ENCODE measurements at regions of chr2 and their contacts with region 1.

Region 1: DNA sequence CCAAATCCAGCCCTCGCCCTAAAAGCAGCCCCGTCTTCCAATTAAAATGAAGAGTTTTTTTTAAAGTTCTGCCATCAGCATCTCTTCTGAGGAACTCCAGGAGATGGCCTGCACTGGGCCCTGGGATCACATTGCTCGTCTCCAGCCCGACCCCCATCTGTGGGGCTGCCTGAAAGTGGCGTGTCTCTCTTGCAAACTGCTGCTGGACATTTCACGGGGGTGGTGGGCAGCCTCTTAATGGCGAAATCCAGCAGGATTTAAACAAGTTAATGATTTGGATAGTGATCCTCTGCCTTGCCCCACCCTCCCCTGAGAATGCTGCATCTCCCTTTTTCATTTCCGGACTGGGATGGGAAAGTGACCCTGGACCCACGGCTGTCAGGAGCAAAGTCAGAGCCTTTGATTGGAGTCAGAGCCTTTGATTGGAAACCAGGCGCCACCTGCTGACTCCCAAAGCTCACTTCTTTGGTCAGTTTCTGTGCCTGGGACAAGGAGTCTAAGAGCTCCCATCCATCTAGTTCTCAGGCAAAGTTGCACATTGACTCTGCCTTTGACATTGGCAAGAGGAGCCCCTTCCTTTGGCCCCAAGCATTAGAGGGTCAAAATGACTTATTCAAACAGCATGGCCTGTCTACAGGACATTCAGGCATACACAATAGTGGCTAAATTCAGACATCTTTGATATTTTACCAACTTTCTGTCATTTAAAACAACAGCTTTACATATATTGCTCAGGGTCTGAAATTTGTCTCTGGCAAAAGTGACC is 155.2 kb downstream of the SH3BP4 start:
- DNase-seq: peak; percentile 69
- ATAC-seq: peak; percentile 76
- H3K4me3 Mint-ChIP-seq: no peak overlapping the region
- H3K27ac Mint-ChIP-seq: no peak overlapping the region
- H3K4me1 Mint-ChIP-seq: peaks cover 8% of the 10 kb centered on the region
- H3K27me3 Mint-ChIP-seq: no peaks in the 10 kb centered on the region
- CTCF ChIP-seq: no peak

Region 2: DNA sequence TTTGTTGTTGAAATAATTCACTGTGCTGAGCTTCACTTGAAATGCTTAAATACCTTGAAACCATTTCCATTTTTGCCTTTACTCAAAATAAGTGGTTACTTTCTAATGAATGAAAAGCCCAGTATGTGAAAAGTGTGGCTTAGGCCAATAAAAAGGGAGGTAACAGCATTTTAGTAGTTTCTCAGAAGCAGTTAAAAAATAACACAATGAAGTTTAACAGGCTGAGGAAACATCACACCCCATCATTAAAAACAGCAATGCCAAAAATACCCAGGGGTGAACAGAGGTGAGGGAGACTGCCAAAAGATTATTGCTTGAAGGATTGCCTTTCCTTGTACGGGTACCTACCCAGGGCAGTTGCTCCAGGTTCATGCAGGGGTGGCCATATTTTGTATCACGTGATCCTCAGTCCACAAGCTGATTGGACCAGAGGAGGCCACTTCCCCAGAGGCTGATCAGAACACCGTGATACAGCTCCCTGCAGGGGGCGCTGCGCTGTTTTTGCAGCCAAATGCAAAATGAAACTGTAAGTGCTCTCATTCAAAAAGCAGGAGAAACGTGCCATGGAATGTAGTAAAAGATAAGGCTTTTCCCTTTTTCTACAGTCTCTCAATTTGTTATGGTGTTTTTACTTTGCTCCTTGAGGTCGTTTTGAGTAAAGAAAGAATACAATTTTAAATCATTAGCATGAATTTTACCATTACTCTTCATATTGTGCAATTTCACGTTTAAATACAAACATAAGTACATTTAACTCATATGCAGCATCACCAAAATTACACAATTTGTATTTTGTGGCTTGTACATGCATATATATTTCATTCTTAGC is 225.4 kb before region 1 on chr2:
- CTCF ChIA-PET with region 1: interaction called, 10 read pairs
- POLR2A ChIA-PET with region 1: no interaction called
- DNase-seq: peak; percentile 89
- ATAC-seq: peak; percentile 93
- H3K4me3 Mint-ChIP-seq: no peak overlapping the region
- H3K27ac Mint-ChIP-seq: peak overlapping the region; percentile 27; the same call in 1 of the 2 replicates
- H3K4me1 Mint-ChIP-seq: peaks cover 38% of the 10 kb centered on the region
- H3K27me3 Mint-ChIP-seq: no peaks in the 10 kb centered on the region; the same call in 1 of the 2 replicates
- CTCF ChIP-seq: peak; percentile 83

Region 3: DNA sequence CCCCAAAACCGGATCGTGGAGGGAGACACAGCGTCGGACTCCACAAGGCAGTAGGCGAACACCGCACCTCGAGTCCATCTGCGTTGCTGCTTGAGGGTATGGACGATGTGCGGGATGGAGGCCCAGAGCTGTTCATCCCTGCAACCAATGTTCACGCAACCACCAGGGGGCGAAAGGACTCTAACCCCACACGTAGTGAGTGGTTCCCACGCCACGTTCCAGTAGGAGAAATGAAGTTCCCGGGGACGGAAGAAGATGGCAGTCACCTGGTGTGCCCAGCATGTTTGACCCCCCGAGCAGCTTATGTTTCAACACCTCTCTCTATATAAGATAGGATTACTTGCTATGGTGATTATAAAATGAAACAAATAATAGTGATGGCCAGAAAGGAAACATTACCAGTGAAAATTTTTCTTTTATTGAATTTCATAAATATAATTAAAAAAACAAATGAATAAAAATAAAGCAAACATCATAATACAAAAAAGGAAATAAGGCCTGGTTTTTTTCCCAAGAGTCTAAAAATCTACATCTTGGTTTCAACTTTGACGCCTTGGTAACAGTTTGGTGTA is 29.0 kb after region 1 on chr2:
- CTCF ChIA-PET with region 1: no interaction called
- POLR2A ChIA-PET with region 1: no interaction called
- DNase-seq: peak; percentile 83
- ATAC-seq: peak; percentile 75
- H3K4me3 Mint-ChIP-seq: no peak overlapping the region
- H3K27ac Mint-ChIP-seq: no peak overlapping the region
- H3K4me1 Mint-ChIP-seq: no peaks in the 10 kb centered on the region
- H3K27me3 Mint-ChIP-seq: peaks cover 40% of the 10 kb centered on the region
- CTCF ChIP-seq: peak; percentile 58

Measured in WTC11 (cell line).